PC-9 (cell line): ENCODE measurements at regions of chr4 and their contacts with region 1.

Region 1: DNA sequence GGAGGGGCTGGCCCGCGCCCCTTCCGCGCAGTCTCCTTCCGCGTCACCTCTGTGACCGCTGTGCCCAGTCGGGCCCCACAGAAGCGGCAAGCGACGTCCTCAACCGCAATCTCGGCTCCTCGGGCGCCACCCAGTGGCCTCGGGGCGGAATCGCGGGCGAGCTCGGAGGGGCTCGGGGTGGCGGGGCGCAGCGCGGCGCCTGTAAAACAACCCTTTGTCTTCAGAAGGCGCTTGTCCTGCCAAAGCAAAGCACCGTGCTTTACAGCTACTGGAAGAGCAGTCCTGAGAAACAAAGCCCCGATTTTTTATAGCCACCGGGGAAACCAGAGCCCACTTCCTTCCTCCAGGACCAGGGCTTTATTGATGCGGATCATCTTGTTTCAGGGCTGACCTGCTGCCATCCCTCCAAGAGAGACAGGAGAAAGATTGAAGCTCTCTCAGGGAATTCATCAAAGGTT is 37.3 kb upstream of the CDKN2AIP start:
- DNase-seq: peak; percentile 40 to 85
- H3K4me3 ChIP-seq: peak overlapping the region; percentile 53
- H3K27ac ChIP-seq: no peak overlapping the region
- H3K4me1 ChIP-seq: peaks cover 4% of the 10 kb centered on the region; the same call in 1 of the 2 replicates
- H3K27me3 ChIP-seq: no peaks in the 10 kb centered on the region
- CTCF ChIP-seq: peak; percentile 87

Region 2: GRCh38 chr4:182938205-182938645 is 468.9 kb before region 1 on chr4:
- CTCF ChIA-PET with region 1: no interaction called
- POLR2A ChIA-PET with region 1: no interaction called
- intact Hi-C with region 1: loop called (anchors 5 kb)
- DNase-seq: peak in 1 of 2 experiments; percentile 76
- H3K4me3 ChIP-seq: no peak overlapping the region
- H3K27ac ChIP-seq: no peak overlapping the region
- H3K4me1 ChIP-seq: no peaks in the 10 kb centered on the region
- H3K27me3 ChIP-seq: peaks cover 4% of the 10 kb centered on the region; the same call in 1 of the 2 replicates
- CTCF ChIP-seq: peak; percentile 88

Region 3: GRCh38 chr4:183053681-183054080 is 353.5 kb before region 1 on chr4:
- CTCF ChIA-PET with region 1: no interaction called
- POLR2A ChIA-PET with region 1: no interaction called
- intact Hi-C with region 1: no loop called
- DNase-seq: no peak
- H3K4me3 ChIP-seq: no peak overlapping the region
- H3K27ac ChIP-seq: no peak overlapping the region
- H3K4me1 ChIP-seq: no peaks in the 10 kb centered on the region
- H3K27me3 ChIP-seq: no peaks in the 10 kb centered on the region
- CTCF ChIP-seq: no peak

Region 4: DNA sequence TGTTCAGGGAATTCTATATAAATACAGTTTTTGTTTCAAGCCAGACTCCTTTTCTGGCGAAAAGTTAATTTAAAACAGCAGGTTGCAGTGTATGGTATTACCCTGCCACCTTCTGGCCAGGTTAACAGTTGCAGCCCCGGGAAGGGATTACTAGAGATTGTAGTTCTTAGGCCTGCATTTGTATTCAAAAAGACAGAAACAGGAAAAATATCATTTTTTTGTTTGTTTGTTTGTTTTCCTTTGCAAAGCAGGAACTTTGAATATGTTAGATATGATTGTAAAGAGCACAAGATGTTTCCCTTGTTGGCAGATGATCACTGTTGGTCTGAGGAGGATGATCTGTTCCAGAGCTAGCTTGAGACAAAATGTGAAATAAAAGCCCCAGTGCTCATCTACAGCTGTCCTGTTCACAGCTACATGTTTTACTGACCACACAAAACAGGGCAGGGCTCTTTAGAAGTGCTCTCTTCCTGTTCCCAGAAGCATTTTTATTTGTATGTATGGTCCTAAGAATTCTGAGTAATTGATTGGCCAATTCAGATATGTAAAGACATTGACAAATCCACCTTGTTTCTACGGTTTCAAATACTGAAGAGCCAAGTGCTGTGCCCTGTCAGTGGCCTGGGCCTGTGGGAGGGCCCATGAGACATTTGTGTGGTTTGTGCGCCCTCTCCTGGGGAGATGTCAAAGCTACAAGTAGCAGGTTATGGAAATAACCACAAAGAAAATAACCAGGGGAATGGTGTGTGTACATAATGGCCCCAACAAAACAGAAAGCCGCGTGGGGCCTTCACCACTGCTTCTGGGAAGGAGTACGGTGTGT is 145.0 kb before region 1 on chr4:
- CTCF ChIA-PET with region 1: interaction called, 3 read pairs
- POLR2A ChIA-PET with region 1: no interaction called
- intact Hi-C with region 1: loop called (anchors 2 kb)
- DNase-seq: peak; percentile 43 to 66
- H3K4me3 ChIP-seq: no peak overlapping the region
- H3K27ac ChIP-seq: no peak overlapping the region
- H3K4me1 ChIP-seq: no peaks in the 10 kb centered on the region
- H3K27me3 ChIP-seq: no peaks in the 10 kb centered on the region
- CTCF ChIP-seq: peak; percentile 72

Region 5: DNA sequence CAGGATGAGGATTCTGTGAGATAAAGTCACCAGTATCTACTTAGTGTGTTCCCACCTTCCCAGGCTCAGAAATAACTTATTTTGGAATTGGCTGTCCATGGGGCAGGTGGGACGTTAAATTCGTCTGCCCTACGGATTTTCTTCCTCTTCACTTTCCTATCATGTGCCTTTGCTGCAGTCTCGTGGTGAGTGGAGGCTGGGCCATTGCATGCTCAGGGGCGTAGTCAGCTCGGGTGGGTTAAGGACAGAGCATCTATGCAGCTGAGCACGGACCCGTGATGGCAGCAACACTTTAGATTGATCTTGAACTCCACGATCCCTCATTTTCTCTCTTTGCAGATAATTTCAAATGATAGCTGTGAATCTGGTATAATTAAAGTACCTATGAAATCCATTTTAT is 138.6 kb before region 1 on chr4:
- CTCF ChIA-PET with region 1: interaction called, 4 read pairs
- POLR2A ChIA-PET with region 1: no interaction called
- intact Hi-C with region 1: loop called (anchors 1 kb)
- DNase-seq: no peak
- H3K4me3 ChIP-seq: no peak overlapping the region
- H3K27ac ChIP-seq: no peak overlapping the region
- H3K4me1 ChIP-seq: no peaks in the 10 kb centered on the region
- H3K27me3 ChIP-seq: no peaks in the 10 kb centered on the region
- CTCF ChIP-seq: no peak

Region 6: GRCh38 chr4:183300070-183300469 is 107.1 kb before region 1 on chr4:
- CTCF ChIA-PET with region 1: no interaction called
- POLR2A ChIA-PET with region 1: no interaction called
- intact Hi-C with region 1: no loop called
- DNase-seq: no peak
- H3K4me3 ChIP-seq: no peak overlapping the region
- H3K27ac ChIP-seq: no peak overlapping the region
- H3K4me1 ChIP-seq: no peaks in the 10 kb centered on the region
- H3K27me3 ChIP-seq: no peaks in the 10 kb centered on the region
- CTCF ChIP-seq: no peak

Region 7: GRCh38 chr4:183444214-183445066 is 37.3 kb after region 1 on chr4 and contains the start of gene CDKN2AIP:
- CTCF ChIA-PET with region 1: no interaction called
- POLR2A ChIA-PET with region 1: no interaction called
- intact Hi-C with region 1: loop called (anchors 1 kb)
- DNase-seq: peak; percentile 81 to 93
- H3K4me3 ChIP-seq: peak within 1 kb of the TSS; percentile 88
- H3K27ac ChIP-seq: peak within 1 kb of the TSS; percentile 93
- H3K4me1 ChIP-seq: peaks cover 12% of the 10 kb centered on the region; the same call in 1 of the 2 replicates
- H3K27me3 ChIP-seq: no peaks in the 10 kb centered on the region
- CTCF ChIP-seq: no peak
- total RNA-seq, gene CDKN2AIP: 7.7 and 8.7 TPM in 2 replicates

Region 8: GRCh38 chr4:183738081-183738673 is 331.0 kb after region 1 on chr4:
- CTCF ChIA-PET with region 1: no interaction called
- POLR2A ChIA-PET with region 1: no interaction called
- intact Hi-C with region 1: no loop called
- DNase-seq: peak; percentile 51 to 94
- H3K4me3 ChIP-seq: no peak overlapping the region
- H3K27ac ChIP-seq: peak overlapping the region; percentile 37
- H3K4me1 ChIP-seq: peaks cover 12% of the 10 kb centered on the region
- H3K27me3 ChIP-seq: no peaks in the 10 kb centered on the region
- CTCF ChIP-seq: no peak